Ascending aorta (tissue), 2 donors: ENCODE measurements at regions of chr3 and their contacts with region 1.

Region 1: DNA sequence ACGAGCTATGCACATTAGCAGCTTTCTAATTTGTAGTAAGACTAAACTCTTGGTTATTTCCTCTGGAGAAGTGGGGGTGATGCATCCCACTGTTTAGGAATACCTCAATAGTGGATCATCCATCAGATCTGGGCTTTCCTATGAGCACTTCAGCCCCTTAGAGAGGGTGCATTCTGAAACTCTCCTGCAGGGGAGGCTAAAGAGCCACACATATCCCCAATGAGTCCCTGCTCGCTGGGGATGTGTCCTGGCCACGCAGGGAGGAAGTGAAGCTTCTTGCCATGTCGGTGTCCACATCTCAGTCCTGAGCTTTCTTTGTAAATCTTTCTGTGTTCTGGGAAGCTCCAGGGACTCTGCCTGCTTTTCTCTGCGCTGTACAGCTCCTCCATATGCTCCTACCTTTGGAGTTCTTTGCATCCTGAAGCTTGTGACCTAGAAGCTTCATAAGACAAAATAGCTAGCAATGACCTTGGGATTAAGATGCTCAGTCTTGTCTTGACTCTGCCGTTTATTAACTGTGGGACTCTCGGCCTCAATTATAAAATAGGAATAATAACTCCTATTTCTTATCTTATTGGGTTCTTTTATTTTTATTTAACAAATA is 28.3 kb upstream of the MASP1 start:
- DNase-seq: peak in 1 of 2 donors; percentile 82
- H3K4me3 ChIP-seq: peak overlapping the region in 1 of 2 donors; percentile 41
- H3K27ac ChIP-seq: no peak overlapping the region
- H3K4me1 ChIP-seq: peaks cover 6 to 10% of the 10 kb centered on the region in 2 donors
- H3K27me3 ChIP-seq: no peaks in the 10 kb centered on the region
- CTCF ChIP-seq: peak; percentile 80 to 91 (median 82)

Region 2: DNA sequence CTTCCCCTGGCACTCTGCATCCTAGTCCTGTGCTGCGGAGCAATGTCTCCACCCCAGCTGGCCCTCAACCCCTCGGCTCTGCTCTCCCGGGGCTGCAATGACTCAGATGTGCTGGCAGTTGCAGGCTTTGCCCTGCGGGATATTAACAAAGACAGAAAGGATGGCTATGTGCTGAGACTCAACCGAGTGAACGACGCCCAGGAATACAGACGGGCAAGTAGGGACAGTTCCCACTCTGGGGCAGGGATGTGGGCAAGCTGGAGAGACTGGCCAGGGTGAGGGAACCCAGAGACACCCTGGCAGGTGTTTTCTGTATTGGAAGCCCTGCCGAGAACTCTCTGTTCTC is 679.4 kb before region 1 on chr3:
- intact Hi-C with region 1: no loop called
- DNase-seq: peak; percentile 21 to 67
- H3K4me3 ChIP-seq: no peak overlapping the region
- H3K27ac ChIP-seq: peak overlapping the region in 1 of 2 donors; percentile 46
- H3K4me1 ChIP-seq: peaks cover 0 to 11% of the 10 kb centered on the region in 2 donors
- H3K27me3 ChIP-seq: no peaks in the 10 kb centered on the region
- CTCF ChIP-seq: no peak

Region 3: GRCh38 chr3:187679638-187680396 is 360.0 kb after region 1 on chr3:
- intact Hi-C with region 1: loop called (anchors 1 kb)
- DNase-seq: peak in 1 of 2 donors; percentile 80
- H3K4me3 ChIP-seq: no peak overlapping the region
- H3K27ac ChIP-seq: no peak overlapping the region
- H3K4me1 ChIP-seq: no peaks in the 10 kb centered on the region
- H3K27me3 ChIP-seq: no peaks in the 10 kb centered on the region
- CTCF ChIP-seq: peak; percentile 75 to 94 (median 93)

Region 4: GRCh38 chr3:187714404-187714979 is 394.7 kb after region 1 on chr3:
- intact Hi-C with region 1: loop called (anchors 1 kb)
- DNase-seq: peak in 1 of 2 donors; percentile 88
- H3K4me3 ChIP-seq: no peak overlapping the region
- H3K27ac ChIP-seq: no peak overlapping the region
- H3K4me1 ChIP-seq: no peaks in the 10 kb centered on the region
- H3K27me3 ChIP-seq: no peaks in the 10 kb centered on the region
- CTCF ChIP-seq: peak; percentile 89 to 94 (median 94)